ENCODE measurements at regions of chr1 and their contacts with region 1.

Region 1: DNA sequence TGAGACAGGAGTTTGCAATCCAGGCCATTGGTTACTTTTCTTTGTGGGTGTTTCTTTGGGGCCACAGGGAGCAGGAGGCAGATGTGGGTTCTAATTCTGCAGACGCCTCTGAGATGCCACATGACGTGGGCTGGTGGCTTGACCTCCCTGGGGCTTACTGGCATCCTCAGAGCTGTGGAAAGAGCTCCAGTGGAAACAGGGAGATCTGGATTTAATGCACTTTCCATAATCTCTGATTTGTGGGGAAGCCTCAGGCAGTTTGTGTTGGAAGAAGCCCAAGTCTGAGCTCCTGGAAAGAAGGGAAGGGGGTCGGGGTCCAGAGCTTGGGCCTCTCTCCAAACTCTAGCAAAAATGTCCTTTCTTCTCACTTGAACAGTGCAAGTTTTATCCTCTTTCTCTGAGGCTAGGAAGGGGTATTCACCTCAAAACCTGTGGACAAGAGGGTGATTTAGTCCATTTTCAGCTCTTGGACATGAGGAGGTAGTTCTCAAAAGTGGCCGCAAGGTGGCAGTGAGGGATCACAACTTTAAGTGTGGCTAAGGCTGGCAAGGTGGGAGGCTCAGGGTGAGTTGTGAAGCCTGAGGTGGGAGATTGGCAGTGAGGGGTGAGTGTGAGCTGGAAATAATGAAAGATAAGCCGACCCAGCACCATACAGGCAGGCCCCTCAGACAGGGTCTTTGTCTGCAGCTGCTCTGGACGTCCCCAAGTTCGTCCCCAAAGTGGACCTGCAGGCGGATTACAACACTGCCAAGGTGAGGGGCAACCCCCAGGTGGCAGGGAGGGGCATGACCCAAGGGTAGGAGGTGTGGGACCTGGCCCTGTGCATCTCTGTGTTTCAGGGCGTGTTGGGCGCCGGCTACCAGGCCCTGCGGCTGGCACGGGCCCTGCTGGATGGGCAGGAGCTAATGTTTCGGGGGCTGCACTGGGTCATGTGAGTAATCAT is 9.2 kb downstream of the IKBKE start:
- DNase-seq: peak; percentile 46 to 84 (median 60)
- ATAC-seq: peak; percentile 93
- H3K4me3 ChIP-seq: no peak overlapping the region
- H3K4me3 Mint-ChIP-seq: no peak overlapping the region
- H3K27ac ChIP-seq: no peak overlapping the region
- H3K27ac Mint-ChIP-seq: peak overlapping the region; percentile 23
- H3K4me1 ChIP-seq: peaks cover 13% of the 10 kb centered on the region
- H3K4me1 Mint-ChIP-seq: peaks cover 15% of the 10 kb centered on the region
- H3K27me3 ChIP-seq: no peaks in the 10 kb centered on the region
- H3K27me3 Mint-ChIP-seq: no peaks in the 10 kb centered on the region
- CTCF ChIP-seq: peak; percentile 73

Region 2: GRCh38 chr1:206461602-206462455 is 17.6 kb before region 1 on chr1:
- CTCF ChIA-PET with region 1: interaction called, 22 read pairs
- POLR2A ChIA-PET with region 1: interaction called, 6 read pairs
- intact Hi-C with region 1: loop called in 1 of 2 experiments (anchors 1 kb)
- DNase-seq: peak; percentile 49 to 86 (median 72)
- ATAC-seq: peak; percentile 87
- H3K4me3 ChIP-seq: no peak overlapping the region
- H3K4me3 Mint-ChIP-seq: no peak overlapping the region
- H3K27ac ChIP-seq: no peak overlapping the region
- H3K27ac Mint-ChIP-seq: peak overlapping the region; percentile 16
- H3K4me1 ChIP-seq: peaks cover 25% of the 10 kb centered on the region
- H3K4me1 Mint-ChIP-seq: peaks cover 17% of the 10 kb centered on the region
- H3K27me3 ChIP-seq: no peaks in the 10 kb centered on the region
- H3K27me3 Mint-ChIP-seq: no peaks in the 10 kb centered on the region
- CTCF ChIP-seq: peak; percentile 80

Region 3: DNA sequence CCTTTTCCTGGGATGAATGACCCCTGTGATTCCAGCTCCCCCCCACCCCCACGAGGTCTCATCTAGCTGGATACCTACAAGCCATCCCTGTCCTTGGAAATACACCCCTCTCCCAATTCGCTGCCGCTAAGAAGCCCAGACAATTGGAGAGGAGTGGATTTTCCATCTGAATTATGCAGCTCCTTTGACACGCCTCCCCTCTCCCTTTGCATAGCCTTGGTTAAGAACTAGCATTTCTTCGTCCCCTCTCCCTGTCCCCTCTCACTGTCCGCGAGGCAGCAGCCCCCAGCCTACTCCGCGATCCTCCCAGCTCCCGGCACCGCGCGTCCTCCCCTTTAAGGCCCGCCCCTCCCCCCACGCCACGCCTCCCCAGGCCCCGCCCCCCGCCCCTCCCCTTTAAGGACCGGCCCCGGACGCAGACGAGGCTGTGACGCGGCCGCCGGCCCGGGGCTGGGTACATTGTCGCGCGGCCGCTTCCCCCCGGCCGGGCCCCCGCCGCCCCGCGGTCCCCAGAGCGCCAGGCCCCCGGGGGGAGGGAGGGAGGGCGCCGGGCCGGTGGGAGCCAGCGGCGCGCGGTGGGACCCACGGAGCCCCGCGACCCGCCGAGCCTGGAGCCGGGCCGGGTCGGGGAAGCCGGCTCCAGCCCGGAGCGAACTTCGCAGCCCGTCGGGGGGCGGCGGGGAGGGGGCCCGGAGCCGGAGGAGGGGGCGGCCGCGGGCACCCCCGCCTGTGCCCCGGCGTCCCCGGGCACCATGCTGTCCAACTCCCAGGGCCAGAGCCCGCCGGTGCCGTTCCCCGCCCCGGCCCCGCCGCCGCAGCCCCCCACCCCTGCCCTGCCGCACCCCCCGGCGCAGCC is 205.3 kb after region 1 on chr1 and contains the start of gene MAPKAPK2:
- CTCF ChIA-PET with region 1: no interaction called
- POLR2A ChIA-PET with region 1: no interaction called
- intact Hi-C with region 1: no loop called
- DNase-seq: peak; percentile 58 to 89 (median 74)
- ATAC-seq: peak; percentile 75
- H3K4me3 ChIP-seq: peak within 1 kb of the TSS; percentile 91
- H3K4me3 Mint-ChIP-seq: peak within 1 kb of the TSS; percentile 98
- H3K27ac ChIP-seq: peak within 1 kb of the TSS; percentile 78 to 85
- H3K27ac Mint-ChIP-seq: peak within 1 kb of the TSS; percentile 96
- H3K4me1 ChIP-seq: peaks cover 37% of the 10 kb centered on the region
- H3K4me1 Mint-ChIP-seq: peaks cover 44% of the 10 kb centered on the region
- H3K27me3 ChIP-seq: no peaks in the 10 kb centered on the region
- H3K27me3 Mint-ChIP-seq: no peaks in the 10 kb centered on the region
- CTCF ChIP-seq: no peak
- total RNA-seq, gene MAPKAPK2: 157 to 166 TPM